ENCODE measurements at regions of chr4 and their contacts with region 1.

Region 1: GRCh38 chr4:105848963-105849362 is 46.3 kb upstream of the NPNT start:
- DNase-seq: no peak
- ATAC-seq: no peak
- H3K4me3 ChIP-seq: no peak overlapping the region
- H3K27ac ChIP-seq: no peak overlapping the region
- H3K4me1 ChIP-seq: no peaks in the 10 kb centered on the region
- H3K27me3 ChIP-seq: no peaks in the 10 kb centered on the region
- CTCF ChIP-seq: no peak

Region 2: GRCh38 chr4:105496899-105497298 is 352.1 kb before region 1 on chr4:
- intact Hi-C with region 1: no loop called
- DNase-seq: no peak
- ATAC-seq: no peak
- H3K4me3 ChIP-seq: no peak overlapping the region
- H3K27ac ChIP-seq: no peak overlapping the region
- H3K4me1 ChIP-seq: no peaks in the 10 kb centered on the region
- H3K27me3 ChIP-seq: peaks cover 0 to 4% (median 0%) of the 10 kb centered on the region in 7 donors
- CTCF ChIP-seq: peak in 5 of 9 donors; percentile 9 to 30 (median 17)

Region 3: DNA sequence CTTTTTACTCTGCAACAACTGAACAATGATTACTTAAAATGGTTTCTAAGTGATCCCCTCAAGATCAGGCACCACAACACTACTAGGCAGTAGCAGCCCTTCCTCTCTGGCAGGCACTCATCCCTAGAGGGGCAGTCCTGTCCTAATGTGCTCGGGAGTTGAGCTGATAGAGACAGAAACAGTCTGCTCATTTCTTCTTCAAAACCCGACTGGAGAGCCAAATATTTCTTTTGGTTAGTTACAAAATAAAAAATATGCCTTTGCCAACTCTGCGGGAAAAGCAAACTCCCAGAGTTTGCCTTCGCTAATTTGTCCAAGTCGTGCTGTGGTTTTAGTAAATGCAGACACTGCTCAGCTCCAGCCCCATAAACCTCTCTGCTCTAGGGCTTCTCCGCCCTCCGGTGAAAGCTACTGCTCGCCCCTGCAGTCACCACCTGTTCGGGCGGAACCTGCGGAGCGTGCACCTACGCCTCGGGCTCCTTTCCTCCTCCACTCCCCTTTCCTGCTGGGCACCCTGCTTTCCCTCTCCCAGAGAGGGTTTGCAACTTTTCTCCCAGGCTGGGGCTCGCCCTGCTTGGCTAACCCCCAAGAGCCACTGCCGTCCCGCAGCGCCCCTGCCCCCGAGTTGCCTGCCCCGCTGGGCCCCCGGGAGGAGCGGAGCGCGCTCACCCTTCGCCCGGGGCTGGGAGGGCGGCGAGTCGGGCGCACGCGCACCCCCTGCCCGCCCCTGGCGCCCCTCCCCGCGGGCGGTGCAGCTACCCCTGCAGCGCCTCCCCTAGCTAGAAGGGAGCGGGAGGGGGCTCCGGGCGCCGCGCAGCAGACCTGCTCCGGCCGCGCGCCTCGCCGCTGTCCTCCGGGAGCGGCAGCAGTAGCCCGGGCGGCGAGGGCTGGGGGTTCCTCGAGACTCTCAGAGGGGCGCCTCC is 46.0 kb after region 1 on chr4 and contains the start of gene NPNT:
- intact Hi-C with region 1: loop called in 1 of 10 experiments (anchors 1 kb)
- DNase-seq: peak in 1 of 2 donors; percentile 13
- ATAC-seq: peak; percentile 40 to 85 (median 62)
- H3K4me3 ChIP-seq: peak within 1 kb of the TSS; percentile 39 to 61 (median 56)
- H3K27ac ChIP-seq: no peak within 1 kb of the TSS
- H3K4me1 ChIP-seq: peaks cover 0 to 21% (median 8%) of the 10 kb centered on the region in 9 donors
- H3K27me3 ChIP-seq: peaks cover 0 to 73% (median 29%) of the 10 kb centered on the region in 7 donors
- CTCF ChIP-seq: no peak
- total RNA-seq, gene NPNT: 1.7 to 10.0 (median 3.8) TPM

Region 4: DNA sequence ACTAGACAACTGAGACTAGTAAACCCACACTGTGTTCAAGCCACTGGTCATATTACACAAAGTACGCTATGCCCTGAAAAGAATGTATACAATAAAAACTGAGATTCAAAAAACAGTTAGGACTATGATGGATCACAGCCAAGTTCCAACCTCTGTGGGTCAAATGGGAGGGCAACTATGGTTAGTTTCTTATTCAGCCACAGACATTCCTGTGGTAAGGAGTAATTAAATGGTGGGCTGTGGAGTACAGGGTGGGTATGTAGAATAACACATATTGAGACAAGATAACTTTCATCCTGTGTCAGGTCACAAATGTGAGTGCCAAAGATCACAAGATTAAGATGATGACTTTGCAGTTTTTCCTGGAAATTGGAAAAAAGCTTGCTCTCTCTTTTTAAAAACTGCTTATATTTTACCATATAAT is 213.5 kb after region 1 on chr4:
- intact Hi-C with region 1: no loop called
- DNase-seq: no peak
- ATAC-seq: no peak
- H3K4me3 ChIP-seq: no peak overlapping the region
- H3K27ac ChIP-seq: no peak overlapping the region
- H3K4me1 ChIP-seq: no peaks in the 10 kb centered on the region
- H3K27me3 ChIP-seq: no peaks in the 10 kb centered on the region
- CTCF ChIP-seq: no peak